Endothelial cell of umbilical vein (primary cell): ENCODE measurements at regions of chr1 and their contacts with region 1.

Region 1: DNA sequence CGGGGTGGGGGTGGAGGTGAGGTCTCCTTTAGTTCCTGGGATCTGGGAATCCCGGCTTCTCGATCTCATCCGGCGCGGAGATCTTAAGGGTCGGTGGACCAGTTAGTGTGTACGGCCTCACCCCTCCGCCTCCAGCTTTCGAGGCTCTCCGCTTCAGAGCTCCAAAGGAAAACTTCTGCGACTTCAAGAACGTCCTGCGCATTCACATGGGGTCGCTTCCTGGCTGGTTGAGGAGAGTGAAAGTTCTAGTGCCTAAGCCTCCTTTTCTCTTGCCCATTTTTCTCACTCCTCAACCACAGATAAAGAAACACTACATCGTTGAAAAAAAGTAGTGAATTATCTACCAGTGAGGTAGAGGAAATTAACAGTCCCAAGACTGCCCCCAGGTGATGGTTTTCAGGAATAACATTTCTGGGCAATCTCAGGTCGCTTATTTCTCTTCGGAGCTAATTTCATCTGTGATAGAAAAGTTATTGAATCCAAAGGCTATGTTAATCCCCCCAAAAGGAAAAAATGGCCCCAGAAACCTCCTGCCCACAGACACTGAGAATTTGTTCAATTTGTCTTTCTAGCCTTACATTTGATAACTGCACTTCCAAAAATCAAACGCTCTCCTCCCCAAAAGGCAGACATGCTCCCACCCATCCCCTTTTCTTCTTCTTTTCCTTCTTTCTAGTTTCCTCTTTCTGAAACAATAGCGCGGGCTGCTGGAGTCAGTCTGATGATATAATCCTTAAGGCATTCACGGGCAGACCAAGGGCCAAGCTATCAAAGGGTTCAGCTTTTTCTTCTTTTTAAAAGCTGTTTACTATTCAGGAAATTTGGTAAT is 20.6 kb upstream of the TBX15 start:
- DNase-seq: peak; percentile 81
- H3K4me3 ChIP-seq: peak overlapping the region in 1 of 3 experiments; percentile 3
- H3K27ac ChIP-seq: no peak overlapping the region
- H3K4me1 ChIP-seq: peaks cover 10% of the 10 kb centered on the region
- H3K27me3 ChIP-seq: peaks cover 59 to 70% of the 10 kb centered on the region in 2 experiments
- CTCF ChIP-seq: peak; percentile 42 to 54
- POLR2A ChIP-seq: no peak

Region 2: GRCh38 chr1:118077331-118078055 is 931.2 kb before region 1 on chr1:
- CTCF ChIA-PET with region 1: interaction called, 35 read pairs
- POLR2A ChIA-PET with region 1: no interaction called
- dilution Hi-C with region 1: no loop called
- intact Hi-C with region 1: loop called (anchors 10 kb)
- DNase-seq: peak; percentile 27
- H3K4me3 ChIP-seq: no peak overlapping the region
- H3K27ac ChIP-seq: no peak overlapping the region
- H3K4me1 ChIP-seq: no peaks in the 10 kb centered on the region
- H3K27me3 ChIP-seq: no peaks in the 10 kb centered on the region
- CTCF ChIP-seq: peak; percentile 18 to 25
- POLR2A ChIP-seq: no peak

Region 3: GRCh38 chr1:118151312-118151937 is 857.3 kb before region 1 on chr1:
- CTCF ChIA-PET with region 1: interaction called, 69 read pairs
- POLR2A ChIA-PET with region 1: no interaction called
- dilution Hi-C with region 1: no loop called
- intact Hi-C with region 1: loop called (anchors 1 kb)
- DNase-seq: peak; percentile 65
- H3K4me3 ChIP-seq: no peak overlapping the region
- H3K27ac ChIP-seq: no peak overlapping the region
- H3K4me1 ChIP-seq: no peaks in the 10 kb centered on the region
- H3K27me3 ChIP-seq: no peaks in the 10 kb centered on the region
- CTCF ChIP-seq: peak; percentile 59 to 60
- POLR2A ChIP-seq: no peak

Region 4: GRCh38 chr1:118992868-118993699 is 15.6 kb before region 1 on chr1:
- CTCF ChIA-PET with region 1: interaction called, 23 read pairs
- POLR2A ChIA-PET with region 1: no interaction called
- dilution Hi-C with region 1: no loop called
- intact Hi-C with region 1: no loop called
- DNase-seq: no peak
- H3K4me3 ChIP-seq: no peak overlapping the region
- H3K27ac ChIP-seq: no peak overlapping the region
- H3K4me1 ChIP-seq: peaks cover 12% of the 10 kb centered on the region
- H3K27me3 ChIP-seq: peaks cover 92 to 95% of the 10 kb centered on the region in 2 experiments
- CTCF ChIP-seq: no peak
- POLR2A ChIP-seq: no peak